Left ventricle myocardium superior (tissue), 1 donor: ENCODE measurements at regions of chr15 and their contacts with region 1.

Region 1: GRCh38 chr15:81155375-81156218 is 21.5 kb downstream of the CFAP161 start:
- DNase-seq: no peak
- ATAC-seq: peak; percentile 51

Region 2: DNA sequence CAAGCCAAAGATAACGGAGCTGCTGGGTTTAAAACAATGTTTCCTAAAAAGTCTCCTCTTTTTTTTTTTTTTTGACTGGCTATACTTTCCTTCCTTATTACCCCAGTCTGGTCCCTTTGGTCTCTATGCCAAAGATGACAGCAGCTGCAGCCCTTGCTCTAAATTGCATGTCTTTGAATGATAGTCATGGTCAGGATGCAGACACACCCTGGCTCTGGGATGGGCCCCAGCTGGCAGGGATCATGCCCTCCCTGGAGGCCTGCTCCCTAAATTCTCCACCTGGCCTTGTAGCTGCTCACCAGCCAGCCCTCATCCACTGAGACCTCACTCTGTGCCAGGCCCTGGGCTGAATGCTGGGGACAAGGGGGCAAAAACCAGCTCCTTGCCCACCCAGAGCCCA is 261.8 kb before region 1 on chr15:
- intact Hi-C with region 1: no loop called
- DNase-seq: peak; percentile 52
- ATAC-seq: peak; percentile 78

Region 3: GRCh38 chr15:81265944-81266775 is 110.6 kb after region 1 on chr15:
- intact Hi-C with region 1: loop called (anchors 5 kb)
- DNase-seq: peak; percentile 81
- ATAC-seq: peak; percentile 94

Region 4: GRCh38 chr15:81323944-81324881 is 168.6 kb after region 1 on chr15 and contains the start of gene STARD5:
- intact Hi-C with region 1: no loop called
- DNase-seq: peak; percentile 100
- ATAC-seq: peak; percentile 100
- total RNA-seq, gene STARD5: 1.8 TPM

Region 5: DNA sequence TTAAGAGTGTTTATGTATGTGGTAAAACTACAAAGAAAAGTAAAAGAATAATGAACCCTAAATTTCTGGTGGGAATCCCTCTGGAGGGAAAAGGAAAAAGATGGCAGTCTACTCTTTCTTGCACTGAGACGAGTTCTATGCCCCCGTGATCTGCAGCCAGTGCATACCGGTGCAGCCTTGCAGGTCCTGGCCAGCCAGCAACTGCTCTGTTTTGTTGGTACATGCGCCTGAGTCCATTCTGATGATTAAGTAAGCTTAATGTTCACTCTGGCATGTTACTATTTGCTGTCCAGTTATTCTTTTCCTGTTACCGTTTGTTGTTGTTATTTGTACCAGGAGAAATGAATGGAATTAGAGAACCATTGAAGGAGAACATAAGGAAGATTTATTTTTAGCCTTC is 313.6 kb after region 1 on chr15:
- intact Hi-C with region 1: no loop called
- DNase-seq: no peak
- ATAC-seq: no peak